Transverse colon (tissue), 4 donors: ENCODE measurements at regions of chr4 and their contacts with region 1.

Region 1: DNA sequence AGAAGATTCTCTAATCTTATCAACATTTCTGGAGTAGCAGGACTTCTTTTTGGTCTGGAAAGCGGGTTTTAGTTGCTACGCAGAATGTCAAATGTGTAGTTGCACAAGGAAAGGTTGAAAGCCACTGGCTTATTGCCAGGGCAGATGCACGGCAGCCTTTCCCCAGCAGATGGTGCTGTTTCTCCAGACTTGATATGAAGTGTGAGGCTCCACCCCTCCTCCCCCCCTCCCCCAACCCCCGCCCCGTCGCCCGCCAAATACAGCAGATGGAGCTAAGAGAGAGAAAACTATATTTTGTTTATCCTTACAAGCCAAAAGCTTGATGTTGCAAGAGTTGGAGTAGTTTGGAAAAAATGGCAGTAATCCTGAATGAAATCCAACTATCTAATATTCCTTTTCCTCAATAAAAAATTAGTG is 32.0 kb downstream of the ENOPH1 start:
- DNase-seq: peak; percentile 90
- H3K4me3 ChIP-seq: no peak overlapping the region
- H3K27ac ChIP-seq: peak overlapping the region in 1 of 4 donors; percentile 27
- H3K4me1 ChIP-seq: peaks cover 0 to 7% (median 3%) of the 10 kb centered on the region in 4 donors
- H3K27me3 ChIP-seq: no peaks in the 10 kb centered on the region
- CTCF ChIP-seq: peak; percentile 54 to 92 (median 84)
- EP300 ChIP-seq: no peak
- POLR2A ChIP-seq: no peak

Region 2: DNA sequence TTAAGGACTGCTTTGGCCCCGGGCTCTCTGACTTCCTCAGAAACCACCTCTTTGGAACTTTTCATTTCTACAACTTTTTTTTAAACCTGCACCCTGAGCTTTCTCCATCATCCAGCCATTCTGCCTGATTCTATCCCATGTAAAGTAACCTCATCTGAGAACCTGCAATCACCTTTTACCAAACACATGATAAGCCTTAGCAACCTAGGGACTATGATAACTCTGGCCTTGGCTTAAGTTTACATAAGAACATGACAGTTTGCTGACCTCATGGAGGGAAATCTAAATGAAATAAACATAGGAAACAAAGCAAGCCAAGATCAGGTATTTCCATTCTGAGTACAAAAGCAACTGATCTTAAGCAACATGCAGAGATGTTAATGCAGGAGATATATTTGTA is 115.0 kb after region 1 on chr4:
- in situ Hi-C with region 1: no loop called
- intact Hi-C with region 1: no loop called
- DNase-seq: no peak
- H3K4me3 ChIP-seq: no peak overlapping the region
- H3K27ac ChIP-seq: no peak overlapping the region
- H3K4me1 ChIP-seq: no peaks in the 10 kb centered on the region
- H3K27me3 ChIP-seq: no peaks in the 10 kb centered on the region
- CTCF ChIP-seq: no peak
- EP300 ChIP-seq: no peak
- POLR2A ChIP-seq: no peak

Region 3: DNA sequence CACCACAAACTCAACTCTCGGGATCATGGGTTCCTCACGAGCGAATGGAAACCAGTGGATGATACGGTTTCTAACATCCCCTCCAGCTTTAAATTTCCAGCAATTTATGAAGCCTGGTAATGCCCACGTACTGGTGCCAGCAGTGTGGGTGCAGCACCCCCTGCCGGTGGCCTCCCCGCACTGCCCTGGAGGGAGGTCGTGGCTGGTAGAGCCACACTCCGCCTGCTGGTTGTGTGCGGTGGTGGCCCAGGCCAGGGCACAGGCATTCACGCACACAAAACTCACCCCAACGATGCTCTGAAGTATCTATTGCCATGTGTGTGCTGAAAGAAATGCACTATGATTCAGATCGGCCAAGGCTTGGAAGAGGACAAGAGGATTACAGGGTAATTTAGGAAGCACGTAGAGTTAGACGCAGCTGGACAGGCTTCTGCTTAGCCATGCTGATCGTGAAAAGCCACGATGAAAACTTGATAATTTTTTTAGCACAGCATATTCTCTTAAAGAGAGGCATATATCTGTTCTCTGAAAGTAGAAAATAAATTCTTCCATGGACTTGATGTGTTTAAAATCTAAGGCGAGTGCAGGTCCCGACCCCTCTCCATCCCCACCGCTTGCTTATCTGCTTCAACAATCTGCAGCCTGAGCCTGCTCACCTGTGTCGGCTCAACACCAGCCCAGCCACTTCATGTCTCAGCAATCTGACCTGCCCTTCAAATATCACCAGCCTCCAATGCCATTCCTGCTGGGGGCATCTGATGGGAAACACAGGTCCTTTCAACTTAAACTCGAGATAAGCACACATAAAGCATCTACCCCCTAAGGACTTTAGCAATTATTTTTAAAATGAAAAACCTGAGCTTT is 277.1 kb after region 1 on chr4:
- in situ Hi-C with region 1: loop called in 3 of 4 experiments (anchors 5 to 10 kb)
- intact Hi-C with region 1: no loop called
- DNase-seq: peak; percentile 81
- H3K4me3 ChIP-seq: no peak overlapping the region
- H3K27ac ChIP-seq: no peak overlapping the region
- H3K4me1 ChIP-seq: no peaks in the 10 kb centered on the region
- H3K27me3 ChIP-seq: no peaks in the 10 kb centered on the region
- CTCF ChIP-seq: peak; percentile 78 to 99 (median 95)
- EP300 ChIP-seq: no peak
- POLR2A ChIP-seq: no peak

Region 4: DNA sequence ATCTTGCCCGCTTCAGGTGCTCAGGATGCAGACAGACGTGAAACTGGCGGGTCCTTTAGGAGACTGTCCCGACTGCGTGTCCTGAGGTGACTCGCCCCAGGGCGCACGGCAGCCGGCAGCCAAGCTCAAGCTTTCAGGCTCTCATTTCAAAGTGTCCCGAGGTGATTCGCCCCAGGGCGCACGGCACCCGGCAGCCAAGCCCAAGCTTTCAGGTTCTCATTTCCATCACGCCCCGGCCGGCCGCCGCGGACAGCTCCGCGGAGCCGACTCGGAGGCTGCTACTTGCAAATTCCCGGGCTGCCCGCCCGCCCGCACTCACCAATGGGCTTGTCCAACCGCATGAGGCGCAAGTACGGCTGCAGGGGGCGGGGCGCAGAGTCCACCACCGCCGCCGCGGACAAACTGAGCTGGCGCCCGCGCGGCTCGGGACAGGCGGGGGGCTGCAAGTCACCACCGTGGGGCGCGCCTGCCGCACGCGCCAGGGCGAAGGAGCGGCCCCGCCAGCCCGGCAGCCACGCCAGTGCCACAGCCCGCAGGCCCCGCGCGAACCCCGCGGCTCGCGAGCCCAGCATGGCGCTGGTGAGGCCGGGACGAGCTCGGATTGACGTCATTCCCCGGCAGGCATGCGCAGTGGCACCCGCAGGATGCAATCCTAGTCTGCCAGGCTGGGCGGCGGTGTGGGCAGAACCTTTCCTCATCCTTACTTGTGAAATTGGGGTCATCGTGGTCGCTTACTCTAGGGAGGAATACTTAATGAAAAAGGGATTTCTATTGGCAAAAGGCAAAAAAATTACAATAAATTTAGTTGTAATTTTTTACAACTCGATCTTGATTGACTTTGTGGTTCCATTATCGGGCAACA is 822.0 kb after region 1 on chr4 and contains the start of gene COQ2:
- in situ Hi-C with region 1: loop called in 1 of 4 experiments (anchors 25 kb)
- intact Hi-C with region 1: no loop called
- DNase-seq: peak; percentile 97
- H3K4me3 ChIP-seq: peak within 1 kb of the TSS; percentile 37 to 80 (median 60)
- H3K27ac ChIP-seq: peak within 1 kb of the TSS; percentile 92 to 96 (median 93)
- H3K4me1 ChIP-seq: peaks cover 5 to 37% (median 20%) of the 10 kb centered on the region in 4 donors
- H3K27me3 ChIP-seq: no peaks in the 10 kb centered on the region
- CTCF ChIP-seq: peak; percentile 14 to 55 (median 24)
- EP300 ChIP-seq: no peak
- POLR2A ChIP-seq: peak; percentile 53
- total RNA-seq, gene COQ2: 0.75 to 14.4 (median 12.2) TPM